Endothelial cell of umbilical vein (primary cell): ENCODE measurements at regions of chrX and their contacts with region 1.

Region 1: GRCh38 chrX:153875391-153876111 is 10.4 kb downstream of the L1CAM start:
- DNase-seq: peak; percentile 39
- H3K4me3 ChIP-seq: no peak overlapping the region
- H3K27ac ChIP-seq: no peak overlapping the region
- H3K4me1 ChIP-seq: no peaks in the 10 kb centered on the region
- H3K27me3 ChIP-seq: peaks cover 3 to 5% of the 10 kb centered on the region in 2 experiments
- CTCF ChIP-seq: no peak
- POLR2A ChIP-seq: no peak

Region 2: GRCh38 chrX:153900831-153901752 is 25.5 kb after region 1 on chrX:
- CTCF ChIA-PET with region 1: no interaction called
- POLR2A ChIA-PET with region 1: interaction called, 15 read pairs
- dilution Hi-C with region 1: no loop called
- intact Hi-C with region 1: no loop called
- DNase-seq: peak; percentile 2
- H3K4me3 ChIP-seq: no peak overlapping the region
- H3K27ac ChIP-seq: no peak overlapping the region
- H3K4me1 ChIP-seq: no peaks in the 10 kb centered on the region
- H3K27me3 ChIP-seq: peaks cover 1 to 5% of the 10 kb centered on the region in 2 experiments
- CTCF ChIP-seq: no peak
- POLR2A ChIP-seq: no peak

Region 3: DNA sequence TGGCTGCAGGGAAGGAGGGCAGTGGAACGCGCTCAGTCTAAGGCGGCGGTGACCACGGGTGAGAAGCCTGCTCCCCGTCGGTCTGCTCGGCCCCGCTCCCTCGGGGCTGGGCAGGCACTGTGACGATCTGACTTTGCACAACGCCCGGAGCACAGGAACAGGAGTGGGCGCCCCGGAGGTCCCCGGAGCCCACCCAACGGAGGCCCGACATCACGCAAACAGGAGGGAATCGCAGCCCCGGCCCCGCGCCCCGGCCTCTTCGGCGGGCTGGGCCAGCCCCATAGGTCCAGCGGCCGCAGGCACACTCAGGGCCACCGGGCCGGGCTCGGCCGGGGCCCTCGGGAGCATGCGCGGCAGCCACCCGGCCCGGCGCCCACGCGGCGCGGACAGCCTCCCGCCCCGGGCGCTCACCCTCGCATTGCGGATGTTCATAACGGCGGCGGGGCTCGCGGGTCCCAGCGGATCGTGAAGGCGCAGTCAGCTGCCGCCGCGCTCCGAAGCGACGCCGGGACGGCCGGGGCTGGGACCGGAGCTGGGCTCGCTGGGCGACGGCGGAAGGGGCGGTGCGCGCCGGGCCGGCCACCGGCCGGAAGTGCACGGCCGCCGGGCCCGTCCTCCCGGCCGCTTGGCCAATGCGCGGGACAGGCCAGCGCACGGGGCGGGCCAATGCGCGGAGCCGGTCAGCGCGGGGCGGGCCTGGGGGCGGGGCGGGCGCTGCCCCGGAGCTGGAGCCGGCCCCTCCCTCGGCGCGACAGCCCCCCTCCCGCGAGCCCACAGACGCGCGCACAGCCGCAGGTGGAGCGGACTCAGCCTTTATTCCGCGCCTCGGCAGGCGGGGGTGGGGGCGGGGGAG is 59.1 kb after region 1 on chrX and contains the start of gene NAA10:
- CTCF ChIA-PET with region 1: no interaction called
- POLR2A ChIA-PET with region 1: no interaction called
- dilution Hi-C with region 1: no loop called
- intact Hi-C with region 1: no loop called
- DNase-seq: peak; percentile 62
- H3K4me3 ChIP-seq: peak within 1 kb of the TSS; percentile 33 to 57 (median 39)
- H3K27ac ChIP-seq: peak within 1 kb of the TSS; percentile 44
- H3K4me1 ChIP-seq: peaks cover 4% of the 10 kb centered on the region
- H3K27me3 ChIP-seq: no peaks in the 10 kb centered on the region
- CTCF ChIP-seq: no peak
- POLR2A ChIP-seq: no peak
- total RNA-seq, gene NAA10: 143 and 144 TPM in 2 replicates

Region 4: DNA sequence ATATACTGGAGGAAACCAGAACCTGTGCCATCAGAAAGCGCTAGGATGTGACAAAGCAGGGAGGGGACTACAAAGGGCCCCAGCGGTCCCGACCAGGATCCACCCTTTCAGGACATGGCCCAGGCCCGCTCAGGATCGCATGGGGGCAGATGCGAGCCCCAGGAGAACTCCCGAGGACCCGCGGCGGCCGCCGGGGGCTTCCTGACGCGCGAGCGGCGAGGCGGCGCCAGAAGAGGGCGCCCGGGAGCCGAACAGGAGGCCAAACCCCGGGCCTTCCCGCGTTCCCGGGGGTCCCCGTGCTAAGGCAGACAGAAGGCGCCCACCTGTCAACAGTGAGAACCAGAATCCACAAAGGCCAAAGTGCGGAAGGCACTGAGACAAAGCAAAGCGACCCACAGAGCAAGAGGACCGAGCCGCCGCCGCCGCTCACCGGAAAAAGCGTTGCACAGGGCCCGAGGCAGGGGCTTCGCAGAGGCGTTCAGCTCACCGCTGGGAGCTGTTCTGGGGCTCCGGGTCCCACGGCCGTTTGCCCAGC is 261.1 kb after region 1 on chrX:
- CTCF ChIA-PET with region 1: no interaction called
- POLR2A ChIA-PET with region 1: no interaction called
- dilution Hi-C with region 1: no loop called
- intact Hi-C with region 1: no loop called
- DNase-seq: peak; percentile 54
- H3K4me3 ChIP-seq: peak overlapping the region in 1 of 3 experiments; percentile 21
- H3K27ac ChIP-seq: peak overlapping the region; percentile 13
- H3K4me1 ChIP-seq: peaks cover 13% of the 10 kb centered on the region
- H3K27me3 ChIP-seq: no peaks in the 10 kb centered on the region
- CTCF ChIP-seq: peak; percentile 76 to 78
- POLR2A ChIP-seq: no peak